ENCODE measurements at regions of chr13 and their contacts with region 1.

Region 1: GRCh38 chr13:109145631-109146030 is 516.2 kb downstream of the MYO16 start:
- DNase-seq: peak; percentile 71
- H3K4me3 ChIP-seq: no peak overlapping the region
- H3K27ac ChIP-seq: peak overlapping the region; percentile 57
- H3K4me1 ChIP-seq: peaks cover 13% of the 10 kb centered on the region
- H3K27me3 ChIP-seq: peaks cover 10 to 19% of the 10 kb centered on the region in 2 experiments
- CTCF ChIP-seq: peak; percentile 73 to 79
- POLR2A ChIP-seq: no peak

Region 2: GRCh38 chr13:108947551-108948030 is 198.0 kb before region 1 on chr13:
- CTCF ChIA-PET with region 1: no interaction called
- POLR2A ChIA-PET with region 1: no interaction called
- dilution Hi-C with region 1: no loop called
- intact Hi-C with region 1: no loop called
- DNase-seq: no peak
- H3K4me3 ChIP-seq: no peak overlapping the region
- H3K27ac ChIP-seq: no peak overlapping the region
- H3K4me1 ChIP-seq: no peaks in the 10 kb centered on the region
- H3K27me3 ChIP-seq: peaks cover 0 to 4% of the 10 kb centered on the region in 2 experiments
- CTCF ChIP-seq: no peak
- POLR2A ChIP-seq: no peak

Region 3: GRCh38 chr13:108961542-108962125 is 184.0 kb before region 1 on chr13:
- CTCF ChIA-PET with region 1: no interaction called
- POLR2A ChIA-PET with region 1: no interaction called
- dilution Hi-C with region 1: no loop called
- intact Hi-C with region 1: loop called (anchors 2 kb)
- DNase-seq: peak; percentile 60
- H3K4me3 ChIP-seq: no peak overlapping the region
- H3K27ac ChIP-seq: no peak overlapping the region
- H3K4me1 ChIP-seq: peaks cover 8% of the 10 kb centered on the region
- H3K27me3 ChIP-seq: no peaks in the 10 kb centered on the region
- CTCF ChIP-seq: peak; percentile 49 to 67
- POLR2A ChIP-seq: no peak

Region 4: GRCh38 chr13:109243311-109243951 is 97.8 kb after region 1 on chr13:
- CTCF ChIA-PET with region 1: interaction called, 3 read pairs
- POLR2A ChIA-PET with region 1: no interaction called
- dilution Hi-C with region 1: no loop called
- intact Hi-C with region 1: loop called (anchors 1 kb)
- DNase-seq: peak; percentile 78
- H3K4me3 ChIP-seq: no peak overlapping the region
- H3K27ac ChIP-seq: peak overlapping the region; percentile 84
- H3K4me1 ChIP-seq: peaks cover 27% of the 10 kb centered on the region
- H3K27me3 ChIP-seq: no peaks in the 10 kb centered on the region
- CTCF ChIP-seq: no peak
- POLR2A ChIP-seq: no peak

Region 5: DNA sequence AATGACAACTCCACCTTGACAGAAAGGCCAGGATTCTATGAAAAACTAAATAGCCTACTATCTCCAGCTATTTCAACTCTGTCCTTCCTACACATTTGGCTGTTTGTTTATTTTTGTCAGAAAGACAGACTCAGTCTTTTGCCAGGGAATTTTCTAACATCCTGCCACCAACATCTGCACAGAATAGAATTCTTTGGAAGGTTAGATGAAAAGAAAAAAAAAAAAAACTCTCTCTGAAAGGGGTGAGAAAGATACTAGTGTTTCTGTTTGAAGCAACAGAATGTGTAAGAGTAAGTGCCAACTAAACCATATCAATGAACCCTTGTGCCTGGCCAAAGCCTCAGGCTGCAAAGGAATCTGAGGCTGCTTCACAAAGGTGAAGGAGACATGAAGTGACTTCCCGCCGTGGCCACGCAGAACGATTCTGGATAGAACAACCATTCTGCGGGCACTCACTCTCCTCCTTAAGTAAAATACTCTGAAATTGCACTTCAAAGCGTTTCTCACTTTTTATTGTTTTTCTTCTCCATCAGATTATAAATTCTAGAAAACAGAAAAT is 142.6 kb after region 1 on chr13:
- CTCF ChIA-PET with region 1: no interaction called
- POLR2A ChIA-PET with region 1: no interaction called
- dilution Hi-C with region 1: no loop called
- intact Hi-C with region 1: no loop called
- DNase-seq: peak; percentile 46
- H3K4me3 ChIP-seq: no peak overlapping the region
- H3K27ac ChIP-seq: no peak overlapping the region
- H3K4me1 ChIP-seq: no peaks in the 10 kb centered on the region
- H3K27me3 ChIP-seq: no peaks in the 10 kb centered on the region
- CTCF ChIP-seq: no peak
- POLR2A ChIP-seq: no peak

Region 6: DNA sequence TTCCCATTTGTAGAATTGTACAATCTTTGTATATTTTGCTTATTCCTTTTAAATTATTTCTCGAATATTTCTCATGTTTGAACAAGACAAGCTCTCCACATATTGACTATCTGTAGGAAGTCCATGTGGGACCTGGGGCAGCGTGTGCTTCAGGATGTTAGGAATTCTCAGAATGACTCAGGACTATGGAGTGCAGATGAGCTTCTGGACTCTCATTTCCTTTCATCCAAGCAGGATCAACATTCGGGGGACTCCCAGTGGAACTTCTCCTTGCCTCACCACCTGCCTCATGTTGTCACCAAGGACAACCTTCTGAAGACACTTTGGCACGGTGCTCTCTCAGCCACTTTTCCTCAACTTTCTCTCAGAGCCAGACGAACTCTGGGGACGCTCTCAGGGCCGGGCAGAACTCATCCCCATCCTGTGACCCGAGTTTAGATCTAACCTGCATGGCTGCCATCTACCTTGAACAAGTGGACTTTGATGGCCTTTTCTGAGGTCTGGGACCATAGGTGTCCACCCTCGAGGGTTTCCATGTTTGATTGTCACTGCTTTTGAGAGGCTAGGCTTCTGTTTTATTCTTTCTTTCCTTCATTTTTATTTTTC is 199.0 kb after region 1 on chr13:
- CTCF ChIA-PET with region 1: interaction called, 6 read pairs
- POLR2A ChIA-PET with region 1: no interaction called
- dilution Hi-C with region 1: no loop called
- intact Hi-C with region 1: loop called (anchors 2 kb)
- DNase-seq: peak; percentile 67
- H3K4me3 ChIP-seq: no peak overlapping the region
- H3K27ac ChIP-seq: peak overlapping the region; percentile 90
- H3K4me1 ChIP-seq: peaks cover 40% of the 10 kb centered on the region
- H3K27me3 ChIP-seq: no peaks in the 10 kb centered on the region
- CTCF ChIP-seq: no peak
- POLR2A ChIP-seq: no peak

Region 7: DNA sequence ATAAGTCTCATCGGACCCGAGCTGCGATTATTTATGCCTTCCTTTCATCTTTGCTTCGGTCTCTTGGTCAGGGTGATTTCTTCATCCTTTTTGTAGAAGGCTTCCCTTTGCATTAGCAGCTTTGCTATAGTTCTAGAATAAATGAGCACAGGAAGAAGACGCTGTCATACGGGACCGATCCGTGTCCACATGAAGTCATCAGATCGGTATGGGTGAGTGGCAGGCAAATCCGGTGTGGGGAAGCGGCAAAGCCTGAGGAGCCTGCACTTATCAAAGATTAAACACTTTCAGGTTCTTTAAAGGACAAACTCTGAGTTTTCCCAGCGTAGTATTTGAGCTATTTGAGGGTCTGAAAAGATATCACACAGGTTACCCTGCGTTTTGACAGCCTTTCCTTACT is 521.4 kb after region 1 on chr13:
- CTCF ChIA-PET with region 1: no interaction called
- POLR2A ChIA-PET with region 1: no interaction called
- dilution Hi-C with region 1: no loop called
- intact Hi-C with region 1: loop called (anchors 10 kb)
- DNase-seq: no peak
- H3K4me3 ChIP-seq: no peak overlapping the region
- H3K27ac ChIP-seq: no peak overlapping the region
- H3K4me1 ChIP-seq: no peaks in the 10 kb centered on the region
- H3K27me3 ChIP-seq: peaks cover 6 to 22% of the 10 kb centered on the region in 2 experiments
- CTCF ChIP-seq: no peak
- POLR2A ChIP-seq: no peak

Region 8: GRCh38 chr13:109779074-109779473 is 633.4 kb after region 1 on chr13:
- CTCF ChIA-PET with region 1: interaction called, 11 read pairs
- POLR2A ChIA-PET with region 1: no interaction called
- dilution Hi-C with region 1: no loop called
- intact Hi-C with region 1: loop called (anchors 1 kb)
- DNase-seq: no peak
- H3K4me3 ChIP-seq: no peak overlapping the region
- H3K27ac ChIP-seq: no peak overlapping the region
- H3K4me1 ChIP-seq: peaks cover 6% of the 10 kb centered on the region
- H3K27me3 ChIP-seq: no peaks in the 10 kb centered on the region
- CTCF ChIP-seq: no peak
- POLR2A ChIP-seq: no peak

Region 9: GRCh38 chr13:110017379-110017778 is 871.7 kb after region 1 on chr13:
- CTCF ChIA-PET with region 1: no interaction called
- POLR2A ChIA-PET with region 1: no interaction called
- dilution Hi-C with region 1: no loop called
- intact Hi-C with region 1: no loop called
- DNase-seq: no peak
- H3K4me3 ChIP-seq: no peak overlapping the region
- H3K27ac ChIP-seq: no peak overlapping the region
- H3K4me1 ChIP-seq: no peaks in the 10 kb centered on the region
- H3K27me3 ChIP-seq: no peaks in the 10 kb centered on the region
- CTCF ChIP-seq: no peak
- POLR2A ChIP-seq: no peak